ENCODE measurements at regions of chr11 and their contacts with region 1.

Region 1: DNA sequence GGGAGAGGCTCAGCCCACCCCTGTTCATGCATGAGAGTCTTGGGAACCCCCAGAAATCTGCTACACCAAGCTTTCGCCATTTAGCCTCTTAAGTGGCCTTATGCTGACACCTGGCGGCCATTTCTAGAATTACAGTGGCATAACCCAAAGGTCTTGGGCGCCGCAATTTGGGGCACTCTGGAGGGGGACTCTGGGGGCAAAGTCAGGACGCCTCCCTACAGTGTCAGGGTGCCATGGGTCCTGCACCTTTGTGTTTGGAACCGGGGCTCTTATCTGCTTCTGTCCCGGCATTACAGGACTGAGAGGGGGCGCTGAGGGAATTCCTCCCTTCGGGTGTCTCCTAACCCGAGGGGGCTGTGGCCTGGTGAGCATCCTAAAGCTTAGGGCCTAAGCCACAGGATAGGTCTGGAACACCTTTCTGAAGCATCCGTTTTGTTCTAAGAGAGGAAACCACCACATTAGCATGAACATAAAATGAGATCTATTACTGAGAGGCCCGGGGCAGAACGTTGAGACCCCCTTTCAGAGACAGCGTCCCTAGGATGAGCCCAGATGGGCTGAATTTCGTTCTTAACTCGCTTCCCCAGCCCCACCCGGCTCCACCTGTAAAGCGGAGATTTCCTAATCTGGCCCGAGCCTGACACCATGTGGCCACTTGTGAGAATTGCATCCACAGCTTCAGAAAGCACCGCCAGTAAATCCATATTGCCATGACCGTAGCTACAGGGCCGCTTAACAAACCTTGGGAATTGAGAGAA is 9.3 kb downstream of the INS start:
- DNase-seq: peak; percentile 58 to 83 (median 78)
- ATAC-seq: peak; percentile 89
- H3K4me3 ChIP-seq: peak overlapping the region; percentile 44
- H3K4me3 Mint-ChIP-seq: peak overlapping the region in 9 of 10 donors; percentile 20 to 71 (median 58)
- H3K27ac ChIP-seq: no peak overlapping the region
- H3K27ac Mint-ChIP-seq: peak overlapping the region in 4 of 9 donors; percentile 25 to 63 (median 32)
- H3K4me1 ChIP-seq: peaks cover 6% of the 10 kb centered on the region in 2 donors
- H3K4me1 Mint-ChIP-seq: peaks cover 0 to 12% (median 6%) of the 10 kb centered on the region in 7 donors
- H3K27me3 ChIP-seq: peaks cover 0 to 8% of the 10 kb centered on the region in 2 donors
- H3K27me3 Mint-ChIP-seq: peaks cover 18 to 40% (median 38%) of the 10 kb centered on the region in 5 donors

Region 2: DNA sequence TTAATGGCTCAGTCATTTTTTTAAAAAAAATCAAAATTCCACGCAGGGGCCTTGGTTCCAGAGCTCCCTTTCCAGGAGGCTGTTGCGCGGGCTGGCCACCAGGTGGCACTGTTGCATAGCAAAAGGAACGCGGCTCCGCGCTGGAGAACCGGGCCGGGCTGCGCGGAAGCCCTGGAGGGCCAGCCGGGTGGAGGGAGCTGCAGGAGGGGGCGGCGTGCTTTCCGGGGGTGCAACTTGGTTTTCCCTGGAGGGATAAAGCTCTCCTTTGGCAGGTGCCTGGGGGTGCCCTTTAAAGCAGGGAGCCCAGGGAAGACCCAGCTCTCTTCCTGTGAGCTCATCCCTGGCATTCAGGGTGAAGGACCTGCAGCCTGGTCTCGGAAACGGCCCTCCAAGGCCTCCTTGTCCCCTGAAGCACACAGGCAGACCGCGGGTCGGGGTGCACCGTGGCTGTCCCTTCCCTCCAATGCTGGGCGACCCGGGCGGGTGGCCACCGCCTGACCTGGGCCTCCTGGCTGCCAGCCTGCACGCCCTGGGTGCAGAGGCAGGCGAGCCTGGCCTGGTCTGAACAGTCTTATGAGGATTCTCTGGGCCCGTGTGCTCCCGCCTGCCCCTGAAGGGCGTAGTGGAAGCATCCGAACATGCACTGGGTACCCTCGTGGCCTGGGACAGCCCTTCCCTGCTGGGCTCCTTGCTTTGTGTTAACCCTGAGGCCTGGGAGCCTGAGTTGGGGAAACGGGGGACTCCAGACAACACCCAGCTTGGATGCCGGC is 498.7 kb before region 1 on chr11:
- CTCF ChIA-PET with region 1: interaction called, 6 read pairs
- POLR2A ChIA-PET with region 1: no interaction called
- intact Hi-C with region 1: loop called (anchors 1 to 2 kb)
- DNase-seq: peak; percentile 54 to 87 (median 78)
- ATAC-seq: peak; percentile 93
- H3K4me3 ChIP-seq: no peak overlapping the region
- H3K4me3 Mint-ChIP-seq: no peak overlapping the region
- H3K27ac ChIP-seq: no peak overlapping the region
- H3K27ac Mint-ChIP-seq: no peak overlapping the region
- H3K4me1 ChIP-seq: no peaks in the 10 kb centered on the region
- H3K4me1 Mint-ChIP-seq: peaks cover 0 to 4% (median 0%) of the 10 kb centered on the region in 7 donors
- H3K27me3 ChIP-seq: no peaks in the 10 kb centered on the region
- H3K27me3 Mint-ChIP-seq: peaks cover 0 to 19% (median 16%) of the 10 kb centered on the region in 5 donors

Region 3: DNA sequence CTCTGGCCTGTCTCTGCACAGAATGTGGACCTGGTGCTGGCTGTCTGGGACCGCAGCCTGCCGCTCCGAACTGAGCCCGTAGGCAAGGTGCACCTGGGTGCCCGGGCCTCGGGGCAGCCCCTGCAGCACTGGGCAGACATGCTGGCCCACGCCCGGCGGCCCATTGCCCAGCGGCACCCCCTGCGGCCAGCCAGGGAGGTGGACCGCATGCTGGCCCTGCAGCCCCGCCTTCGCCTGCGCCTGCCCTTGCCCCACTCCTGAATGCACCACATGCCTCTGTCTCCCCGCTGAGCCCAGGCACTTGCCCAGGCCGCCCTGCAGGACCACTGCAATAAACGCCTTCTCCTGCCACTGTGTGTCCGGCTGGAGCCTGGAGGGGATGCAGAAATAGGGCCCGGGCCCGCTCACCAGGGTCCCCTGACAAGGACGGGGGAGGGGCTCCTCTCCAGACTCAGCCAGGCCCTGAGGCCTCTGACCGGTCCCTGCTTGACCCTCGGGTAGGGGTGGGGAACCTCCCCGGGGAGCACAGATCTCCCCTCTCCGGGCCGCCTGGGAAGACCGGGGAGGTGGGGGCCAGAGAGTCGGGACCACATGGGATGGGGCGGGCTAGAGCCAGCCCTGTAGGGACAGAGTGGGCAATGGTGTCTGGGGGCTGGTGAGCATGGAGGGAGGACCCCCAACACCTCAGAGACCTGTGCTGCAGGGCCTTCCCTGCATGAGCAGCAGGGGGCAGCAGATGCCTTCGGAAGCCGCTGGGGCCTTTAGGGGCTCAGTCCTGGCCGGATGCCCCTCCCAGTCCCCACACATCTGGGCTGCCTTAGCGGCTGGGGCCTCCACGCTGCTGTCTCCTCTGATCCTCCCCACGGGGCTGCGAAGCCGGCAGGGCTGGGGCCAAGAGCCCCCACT is 314.3 kb before region 1 on chr11:
- CTCF ChIA-PET with region 1: interaction called, 33 read pairs
- POLR2A ChIA-PET with region 1: no interaction called
- intact Hi-C with region 1: loop called in 1 of 2 experiments (anchors 1 kb)
- DNase-seq: peak; percentile 53 to 83 (median 75)
- ATAC-seq: peak; percentile 84
- H3K4me3 ChIP-seq: no peak overlapping the region
- H3K4me3 Mint-ChIP-seq: peak overlapping the region in 1 of 10 donors; percentile 14
- H3K27ac ChIP-seq: no peak overlapping the region
- H3K27ac Mint-ChIP-seq: peak overlapping the region in 1 of 9 donors; percentile 19
- H3K4me1 ChIP-seq: peaks cover 0 to 7% of the 10 kb centered on the region in 2 donors
- H3K4me1 Mint-ChIP-seq: peaks cover 0 to 11% (median 7%) of the 10 kb centered on the region in 7 donors
- H3K27me3 ChIP-seq: no peaks in the 10 kb centered on the region
- H3K27me3 Mint-ChIP-seq: peaks cover 0 to 3% (median 0%) of the 10 kb centered on the region in 5 donors

Region 4: DNA sequence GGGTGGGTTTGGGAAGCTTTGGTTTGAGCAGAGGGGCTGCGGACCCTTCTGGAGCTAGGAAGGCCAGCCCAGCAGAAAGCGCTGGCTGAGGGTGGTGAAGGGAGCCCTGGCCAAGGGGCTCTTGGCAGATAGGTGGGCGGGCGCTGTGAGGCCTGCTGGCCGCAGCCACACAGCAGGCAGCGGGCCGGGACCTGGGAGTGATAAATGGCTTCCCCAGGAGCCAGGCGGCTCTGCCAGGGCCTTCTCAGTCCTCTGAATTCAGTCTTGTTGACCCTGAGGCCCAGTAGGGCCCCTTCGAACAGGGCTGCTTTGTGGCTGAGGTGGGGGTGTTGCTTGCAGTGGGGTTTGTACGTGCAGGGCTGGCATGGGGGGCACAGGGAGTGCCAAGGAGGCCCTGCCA is 120.6 kb before region 1 on chr11:
- CTCF ChIA-PET with region 1: interaction called, 153 read pairs
- POLR2A ChIA-PET with region 1: interaction called, 5 read pairs
- intact Hi-C with region 1: no loop called
- DNase-seq: no peak
- ATAC-seq: no peak
- H3K4me3 ChIP-seq: no peak overlapping the region
- H3K4me3 Mint-ChIP-seq: no peak overlapping the region
- H3K27ac ChIP-seq: no peak overlapping the region
- H3K27ac Mint-ChIP-seq: no peak overlapping the region
- H3K4me1 ChIP-seq: no peaks in the 10 kb centered on the region
- H3K4me1 Mint-ChIP-seq: no peaks in the 10 kb centered on the region
- H3K27me3 ChIP-seq: no peaks in the 10 kb centered on the region
- H3K27me3 Mint-ChIP-seq: no peaks in the 10 kb centered on the region

Region 5: GRCh38 chr11:2036863-2037486 is 114.7 kb before region 1 on chr11:
- CTCF ChIA-PET with region 1: interaction called, 153 read pairs
- POLR2A ChIA-PET with region 1: interaction called, 5 read pairs
- intact Hi-C with region 1: no loop called
- DNase-seq: no peak
- ATAC-seq: peak; percentile 69
- H3K4me3 ChIP-seq: no peak overlapping the region
- H3K4me3 Mint-ChIP-seq: no peak overlapping the region
- H3K27ac ChIP-seq: no peak overlapping the region
- H3K27ac Mint-ChIP-seq: no peak overlapping the region
- H3K4me1 ChIP-seq: no peaks in the 10 kb centered on the region
- H3K4me1 Mint-ChIP-seq: no peaks in the 10 kb centered on the region
- H3K27me3 ChIP-seq: no peaks in the 10 kb centered on the region
- H3K27me3 Mint-ChIP-seq: no peaks in the 10 kb centered on the region